ENCODE measurements at regions of chrX and their contacts with region 1.

Region 1: DNA sequence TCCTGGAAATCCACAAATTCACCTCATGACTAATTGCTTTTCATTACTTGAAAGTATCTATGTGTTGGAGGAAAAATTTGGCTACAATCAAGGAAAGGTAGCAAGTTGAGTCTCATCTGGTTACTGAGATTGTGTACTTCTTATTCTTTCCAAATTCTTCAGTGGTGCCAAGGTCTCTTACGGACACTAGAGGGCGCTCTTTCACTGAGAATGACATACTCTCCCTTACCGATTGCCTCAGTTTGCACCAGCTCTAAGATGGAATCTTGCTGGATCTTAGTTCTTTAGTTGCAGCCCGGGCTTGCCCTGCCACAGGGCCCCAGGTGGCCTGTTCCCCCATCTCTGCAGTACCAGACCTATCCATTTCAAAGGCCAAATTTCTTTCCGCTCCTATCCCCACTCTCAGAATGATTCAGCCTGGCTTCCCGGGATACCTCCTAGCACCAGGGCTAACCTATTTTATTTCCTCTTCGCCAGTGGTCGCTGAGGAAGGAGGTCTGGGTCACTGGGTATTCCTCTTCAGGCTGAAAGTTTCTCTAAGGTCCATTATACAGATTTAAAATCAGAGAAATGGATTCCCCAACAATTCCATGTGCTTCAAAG is 24.6 kb upstream of the GPR50 start:
- DNase-seq: peak in 9 of 14 experiments; percentile 0 to 76 (median 19)
- ATAC-seq: no peak
- H3K4me3 ChIP-seq: no peak overlapping the region
- H3K4me3 Mint-ChIP-seq: no peak overlapping the region
- H3K27ac ChIP-seq: no peak overlapping the region
- H3K27ac Mint-ChIP-seq: no peak overlapping the region
- H3K4me1 ChIP-seq: no peaks in the 10 kb centered on the region
- H3K4me1 Mint-ChIP-seq: no peaks in the 10 kb centered on the region
- H3K27me3 ChIP-seq: peaks cover 2 to 3% of the 10 kb centered on the region in 2 experiments
- H3K27me3 Mint-ChIP-seq: peaks cover 43% of the 10 kb centered on the region
- CTCF ChIP-seq: peak; percentile 67

Region 2: GRCh38 chrX:150635952-150636351 is 515.8 kb before region 1 on chrX:
- CTCF ChIA-PET with region 1: no interaction called
- POLR2A ChIA-PET with region 1: no interaction called
- intact Hi-C with region 1: no loop called
- DNase-seq: peak in 2 of 14 experiments; percentile 1 to 12
- ATAC-seq: no peak
- H3K4me3 ChIP-seq: no peak overlapping the region
- H3K4me3 Mint-ChIP-seq: no peak overlapping the region
- H3K27ac ChIP-seq: no peak overlapping the region
- H3K27ac Mint-ChIP-seq: no peak overlapping the region
- H3K4me1 ChIP-seq: no peaks in the 10 kb centered on the region
- H3K4me1 Mint-ChIP-seq: no peaks in the 10 kb centered on the region
- H3K27me3 ChIP-seq: no peaks in the 10 kb centered on the region
- H3K27me3 Mint-ChIP-seq: no peaks in the 10 kb centered on the region
- CTCF ChIP-seq: no peak

Region 3: DNA sequence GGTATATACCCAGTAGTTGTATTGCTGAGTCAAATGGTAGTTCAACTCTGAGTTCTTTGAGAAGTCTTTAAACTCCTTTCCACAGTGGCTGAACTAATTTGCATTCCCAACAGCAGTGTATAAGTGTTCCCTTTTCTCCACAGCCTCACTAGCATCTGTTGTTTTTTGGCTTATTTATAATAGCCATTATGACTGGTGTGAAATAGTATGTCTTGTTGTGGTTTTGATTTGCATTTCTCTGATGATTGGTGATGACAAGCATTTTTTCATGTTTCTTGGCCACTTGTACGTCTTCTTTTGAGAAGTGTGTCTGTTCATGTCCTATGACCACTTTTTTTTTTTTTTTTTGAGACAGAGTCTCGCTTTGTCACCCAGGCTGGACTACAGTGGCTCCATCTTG is 55.1 kb after region 1 on chrX:
- CTCF ChIA-PET with region 1: no interaction called
- POLR2A ChIA-PET with region 1: no interaction called
- intact Hi-C with region 1: no loop called
- DNase-seq: no peak
- ATAC-seq: no peak
- H3K4me3 ChIP-seq: no peak overlapping the region
- H3K4me3 Mint-ChIP-seq: no peak overlapping the region
- H3K27ac ChIP-seq: no peak overlapping the region
- H3K27ac Mint-ChIP-seq: no peak overlapping the region
- H3K4me1 ChIP-seq: no peaks in the 10 kb centered on the region
- H3K4me1 Mint-ChIP-seq: no peaks in the 10 kb centered on the region
- H3K27me3 ChIP-seq: no peaks in the 10 kb centered on the region
- H3K27me3 Mint-ChIP-seq: peaks cover 19% of the 10 kb centered on the region
- CTCF ChIP-seq: no peak

Region 4: DNA sequence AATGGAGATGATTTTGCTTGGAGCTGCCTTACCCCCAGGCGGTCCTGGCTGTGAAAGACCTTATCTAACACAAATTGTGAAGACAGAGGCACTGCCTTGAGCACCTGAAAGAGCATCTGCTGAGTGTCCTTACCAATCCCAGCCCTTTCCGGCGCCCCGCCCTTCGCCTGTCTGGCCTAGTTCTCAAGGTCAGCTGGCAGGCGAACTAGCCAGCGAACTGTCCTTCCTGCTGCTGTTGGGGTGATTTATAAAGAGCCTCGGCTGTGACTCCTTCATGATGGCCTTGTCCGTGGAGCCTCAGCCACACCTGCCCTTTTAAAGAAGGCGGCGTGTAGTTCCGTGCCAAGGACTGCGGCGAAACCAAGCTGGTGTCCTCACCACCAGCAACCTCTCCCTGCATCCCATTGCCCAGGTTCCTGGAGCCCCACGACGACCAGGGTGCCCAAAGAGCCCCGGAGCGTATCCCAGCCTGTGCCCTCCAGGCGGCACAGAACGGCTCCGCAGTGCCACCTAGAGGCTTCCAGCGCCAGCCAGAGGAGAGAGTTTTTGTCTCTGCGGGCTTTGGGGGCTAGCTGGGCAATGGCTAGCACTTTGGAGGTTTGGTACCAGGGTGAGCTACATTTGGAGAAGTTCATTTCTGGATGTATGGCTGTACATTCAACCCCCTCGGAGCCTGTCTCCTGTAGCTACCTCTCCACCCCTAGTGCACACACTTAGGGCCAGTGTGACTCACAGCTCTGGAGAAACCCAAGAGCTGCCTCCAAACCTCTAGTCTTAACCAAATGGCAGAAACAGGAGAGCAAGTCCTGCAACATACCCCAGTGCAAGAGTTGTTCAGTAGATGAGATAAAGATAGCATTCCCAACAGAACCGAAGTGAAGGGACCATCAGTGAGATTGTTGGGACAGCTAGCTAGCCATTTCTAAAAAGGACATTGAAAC is 208.4 kb after region 1 on chrX:
- CTCF ChIA-PET with region 1: no interaction called
- POLR2A ChIA-PET with region 1: no interaction called
- intact Hi-C with region 1: loop called in 1 of 2 experiments (anchors 5 kb)
- DNase-seq: peak; percentile 12 to 55 (median 26)
- ATAC-seq: peak; percentile 57
- H3K4me3 ChIP-seq: peak overlapping the region; percentile 19
- H3K4me3 Mint-ChIP-seq: peak overlapping the region; percentile 42
- H3K27ac ChIP-seq: no peak overlapping the region
- H3K27ac Mint-ChIP-seq: no peak overlapping the region
- H3K4me1 ChIP-seq: peaks cover 7% of the 10 kb centered on the region
- H3K4me1 Mint-ChIP-seq: no peaks in the 10 kb centered on the region
- H3K27me3 ChIP-seq: peaks cover 0 to 10% of the 10 kb centered on the region in 2 experiments
- H3K27me3 Mint-ChIP-seq: peaks cover 12% of the 10 kb centered on the region
- CTCF ChIP-seq: peak; percentile 59

Region 5: GRCh38 chrX:151488677-151489076 is 336.9 kb after region 1 on chrX:
- CTCF ChIA-PET with region 1: no interaction called
- POLR2A ChIA-PET with region 1: no interaction called
- intact Hi-C with region 1: loop called (anchors 1 to 5 kb)
- DNase-seq: peak in 6 of 14 experiments; percentile 1 to 44 (median 14)
- ATAC-seq: no peak
- H3K4me3 ChIP-seq: no peak overlapping the region
- H3K4me3 Mint-ChIP-seq: no peak overlapping the region
- H3K27ac ChIP-seq: no peak overlapping the region
- H3K27ac Mint-ChIP-seq: no peak overlapping the region
- H3K4me1 ChIP-seq: no peaks in the 10 kb centered on the region
- H3K4me1 Mint-ChIP-seq: no peaks in the 10 kb centered on the region
- H3K27me3 ChIP-seq: no peaks in the 10 kb centered on the region
- H3K27me3 Mint-ChIP-seq: no peaks in the 10 kb centered on the region
- CTCF ChIP-seq: no peak

Region 6: DNA sequence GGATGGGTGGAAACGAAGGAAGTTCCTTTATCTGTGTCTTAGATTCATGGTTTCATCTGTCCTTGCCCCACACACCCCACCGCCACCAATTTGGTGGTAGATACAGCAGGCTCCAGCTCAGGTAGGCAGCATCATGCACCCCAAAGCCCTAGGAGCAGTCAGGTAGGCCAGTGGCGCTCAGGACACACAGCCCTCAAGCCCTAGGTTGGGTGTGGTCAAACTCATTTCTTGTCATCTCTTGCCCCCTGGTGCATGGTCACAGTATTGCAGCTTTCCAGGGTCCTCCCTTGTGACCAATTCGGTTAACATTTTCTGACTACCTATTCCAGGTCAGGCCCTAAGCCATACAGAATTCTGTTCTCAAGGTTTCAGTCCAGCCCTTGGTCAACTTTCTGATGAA is 529.0 kb after region 1 on chrX:
- CTCF ChIA-PET with region 1: interaction called, 10 read pairs
- POLR2A ChIA-PET with region 1: no interaction called
- intact Hi-C with region 1: loop called (anchors 1 kb)
- DNase-seq: peak in 13 of 14 experiments; percentile 7 to 61 (median 35)
- ATAC-seq: no peak
- H3K4me3 ChIP-seq: no peak overlapping the region
- H3K4me3 Mint-ChIP-seq: no peak overlapping the region
- H3K27ac ChIP-seq: no peak overlapping the region
- H3K27ac Mint-ChIP-seq: no peak overlapping the region
- H3K4me1 ChIP-seq: no peaks in the 10 kb centered on the region
- H3K4me1 Mint-ChIP-seq: no peaks in the 10 kb centered on the region
- H3K27me3 ChIP-seq: no peaks in the 10 kb centered on the region
- H3K27me3 Mint-ChIP-seq: peaks cover 9% of the 10 kb centered on the region
- CTCF ChIP-seq: peak; percentile 48

Region 7: DNA sequence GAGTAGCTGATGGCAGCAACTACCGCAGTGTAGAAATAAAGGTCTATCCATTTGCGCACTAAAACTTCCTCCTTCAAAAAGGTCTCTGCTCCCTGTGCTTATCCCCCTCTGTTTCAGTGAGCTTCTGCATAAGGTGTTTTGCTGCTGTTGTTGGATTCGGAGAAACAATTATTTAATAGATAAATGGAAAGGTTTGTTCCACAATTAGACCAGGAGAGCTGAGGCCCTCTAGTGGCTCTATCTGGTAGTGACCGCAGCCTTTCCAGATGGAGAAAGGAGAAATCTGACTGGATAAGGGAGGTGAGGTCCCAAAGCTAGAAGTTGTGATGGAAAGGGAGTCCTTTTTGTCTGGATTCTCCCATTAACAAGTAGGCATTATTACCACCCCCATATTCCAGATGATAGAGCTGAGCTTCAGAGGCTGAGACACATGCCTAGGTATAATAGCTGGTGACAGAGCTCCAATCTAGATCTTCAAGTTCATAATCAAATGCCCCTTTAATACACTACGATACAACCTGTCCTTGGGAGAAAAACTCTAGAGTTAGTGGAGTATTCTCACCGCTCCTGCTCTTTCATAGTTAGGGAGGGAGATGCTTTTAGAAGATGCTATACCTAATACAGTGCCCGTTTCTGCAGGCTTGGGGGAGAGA is 1480.8 kb after region 1 on chrX:
- CTCF ChIA-PET with region 1: interaction called, 4 read pairs
- POLR2A ChIA-PET with region 1: no interaction called
- intact Hi-C with region 1: loop called (anchors 5 kb)
- DNase-seq: peak in 8 of 14 experiments; percentile 1 to 32 (median 11)
- ATAC-seq: no peak
- H3K4me3 ChIP-seq: no peak overlapping the region
- H3K4me3 Mint-ChIP-seq: no peak overlapping the region
- H3K27ac ChIP-seq: no peak overlapping the region
- H3K27ac Mint-ChIP-seq: no peak overlapping the region
- H3K4me1 ChIP-seq: no peaks in the 10 kb centered on the region
- H3K4me1 Mint-ChIP-seq: no peaks in the 10 kb centered on the region
- H3K27me3 ChIP-seq: peaks cover 3 to 5% of the 10 kb centered on the region in 2 experiments
- H3K27me3 Mint-ChIP-seq: peaks cover 31% of the 10 kb centered on the region
- CTCF ChIP-seq: peak; percentile 60

Region 8: GRCh38 chrX:152817078-152817764 is 1665.5 kb after region 1 on chrX:
- CTCF ChIA-PET with region 1: no interaction called
- POLR2A ChIA-PET with region 1: no interaction called
- intact Hi-C with region 1: loop called in 1 of 2 experiments (anchors 5 kb)
- DNase-seq: no peak
- ATAC-seq: no peak
- H3K4me3 ChIP-seq: no peak overlapping the region
- H3K4me3 Mint-ChIP-seq: no peak overlapping the region
- H3K27ac ChIP-seq: no peak overlapping the region
- H3K27ac Mint-ChIP-seq: no peak overlapping the region
- H3K4me1 ChIP-seq: no peaks in the 10 kb centered on the region
- H3K4me1 Mint-ChIP-seq: peaks cover 10% of the 10 kb centered on the region
- H3K27me3 ChIP-seq: peaks cover 0 to 2% of the 10 kb centered on the region in 2 experiments
- H3K27me3 Mint-ChIP-seq: peaks cover 8% of the 10 kb centered on the region
- CTCF ChIP-seq: no peak

Region 9: DNA sequence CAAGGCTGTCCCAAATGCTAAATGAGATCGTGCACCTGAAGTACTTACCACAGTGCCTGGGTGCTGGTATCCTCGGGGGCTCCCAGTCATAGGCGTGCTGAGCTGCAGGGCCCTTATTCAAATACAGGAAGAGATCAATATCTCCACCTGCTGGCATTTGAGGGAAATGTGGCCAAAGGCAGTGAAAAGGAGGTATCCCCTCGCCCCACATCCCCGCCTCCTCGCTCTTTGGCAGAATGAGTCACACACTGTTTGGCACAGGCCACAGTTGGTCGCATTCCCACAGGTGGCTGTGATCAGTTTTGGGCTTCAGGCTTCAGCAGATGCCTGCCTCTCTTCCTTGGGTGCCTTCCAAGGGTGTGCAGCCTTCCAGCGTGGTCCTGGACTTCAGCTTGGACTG is 1774.5 kb after region 1 on chrX:
- CTCF ChIA-PET with region 1: no interaction called
- POLR2A ChIA-PET with region 1: no interaction called
- intact Hi-C with region 1: loop called in 1 of 2 experiments (anchors 5 kb)
- DNase-seq: peak; percentile 8 to 67 (median 32)
- ATAC-seq: peak; percentile 73
- H3K4me3 ChIP-seq: no peak overlapping the region
- H3K4me3 Mint-ChIP-seq: no peak overlapping the region
- H3K27ac ChIP-seq: no peak overlapping the region
- H3K27ac Mint-ChIP-seq: no peak overlapping the region
- H3K4me1 ChIP-seq: peaks cover 7% of the 10 kb centered on the region
- H3K4me1 Mint-ChIP-seq: peaks cover 6% of the 10 kb centered on the region
- H3K27me3 ChIP-seq: no peaks in the 10 kb centered on the region
- H3K27me3 Mint-ChIP-seq: no peaks in the 10 kb centered on the region
- CTCF ChIP-seq: no peak

Measured in CD4-positive, alpha-beta T cell (primary cell).